Mammary epithelial cell (primary cell): ENCODE measurements at regions of chr16 and their contacts with region 1.

Region 1: DNA sequence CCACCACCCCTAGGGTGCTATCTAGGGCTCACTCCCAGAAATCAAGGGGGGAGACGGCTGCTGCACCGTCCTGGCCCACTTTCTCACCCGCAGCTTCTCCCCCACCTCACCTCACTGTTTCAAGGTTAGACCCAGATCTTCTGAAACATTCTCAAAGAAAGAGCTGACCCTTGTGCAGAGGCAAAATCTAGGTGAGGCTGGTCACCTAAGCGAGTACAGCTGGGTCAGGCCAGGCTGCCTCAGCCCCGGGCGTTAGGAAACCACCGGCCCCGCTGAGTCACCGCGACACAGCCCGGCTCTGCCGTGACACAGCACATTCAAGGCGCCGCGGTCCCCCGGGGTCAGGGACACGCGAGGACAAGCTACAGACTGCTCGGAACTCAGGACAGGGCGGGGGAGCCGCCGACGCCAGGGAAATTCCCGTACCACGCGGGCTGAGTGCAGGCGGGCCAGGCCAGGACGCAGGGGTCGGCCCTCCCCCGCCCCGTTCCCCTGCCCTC is 27.1 kb downstream of the GNPTG start:
- DNase-seq: peak; percentile 85
- H3K4me3 ChIP-seq: peak overlapping the region; percentile 36 to 47 (median 45)
- H3K27ac ChIP-seq: peak overlapping the region; percentile 57
- H3K4me1 ChIP-seq: peaks cover 14% of the 10 kb centered on the region
- H3K27me3 ChIP-seq: no peaks in the 10 kb centered on the region
- CTCF ChIP-seq: no peak

Region 2: GRCh38 chr16:720990-721764 is 657.7 kb before region 1 on chr16 and contains the start of gene ANTKMT:
- CTCF ChIA-PET with region 1: no interaction called
- dilution Hi-C with region 1: loop called (anchors 25 kb)
- in situ Hi-C with region 1: no loop called
- intact Hi-C with region 1: no loop called
- DNase-seq: peak; percentile 77
- H3K4me3 ChIP-seq: peak within 1 kb of the TSS; percentile 65 to 79 (median 78)
- H3K27ac ChIP-seq: peak within 1 kb of the TSS; percentile 24
- H3K4me1 ChIP-seq: peaks cover 32% of the 10 kb centered on the region
- H3K27me3 ChIP-seq: no peaks in the 10 kb centered on the region
- CTCF ChIP-seq: no peak
- total RNA-seq, gene ANTKMT: 13.5 to 35.4 TPM

Region 3: GRCh38 chr16:1113889-1114526 is 264.8 kb before region 1 on chr16:
- CTCF ChIA-PET with region 1: no interaction called
- dilution Hi-C with region 1: loop called (anchors 5 kb)
- in situ Hi-C with region 1: no loop called
- intact Hi-C with region 1: no loop called
- DNase-seq: no peak
- H3K4me3 ChIP-seq: no peak overlapping the region
- H3K27ac ChIP-seq: no peak overlapping the region
- H3K4me1 ChIP-seq: peaks cover 3% of the 10 kb centered on the region
- H3K27me3 ChIP-seq: peaks cover 6% of the 10 kb centered on the region
- CTCF ChIP-seq: no peak

Region 4: GRCh38 chr16:1317479-1318267 is 61.2 kb before region 1 on chr16:
- CTCF ChIA-PET with region 1: no interaction called
- dilution Hi-C with region 1: loop called (anchors 5 kb)
- in situ Hi-C with region 1: no loop called
- intact Hi-C with region 1: no loop called
- DNase-seq: no peak
- H3K4me3 ChIP-seq: no peak overlapping the region
- H3K27ac ChIP-seq: no peak overlapping the region
- H3K4me1 ChIP-seq: peaks cover 4% of the 10 kb centered on the region
- H3K27me3 ChIP-seq: no peaks in the 10 kb centered on the region
- CTCF ChIP-seq: no peak

Region 5: DNA sequence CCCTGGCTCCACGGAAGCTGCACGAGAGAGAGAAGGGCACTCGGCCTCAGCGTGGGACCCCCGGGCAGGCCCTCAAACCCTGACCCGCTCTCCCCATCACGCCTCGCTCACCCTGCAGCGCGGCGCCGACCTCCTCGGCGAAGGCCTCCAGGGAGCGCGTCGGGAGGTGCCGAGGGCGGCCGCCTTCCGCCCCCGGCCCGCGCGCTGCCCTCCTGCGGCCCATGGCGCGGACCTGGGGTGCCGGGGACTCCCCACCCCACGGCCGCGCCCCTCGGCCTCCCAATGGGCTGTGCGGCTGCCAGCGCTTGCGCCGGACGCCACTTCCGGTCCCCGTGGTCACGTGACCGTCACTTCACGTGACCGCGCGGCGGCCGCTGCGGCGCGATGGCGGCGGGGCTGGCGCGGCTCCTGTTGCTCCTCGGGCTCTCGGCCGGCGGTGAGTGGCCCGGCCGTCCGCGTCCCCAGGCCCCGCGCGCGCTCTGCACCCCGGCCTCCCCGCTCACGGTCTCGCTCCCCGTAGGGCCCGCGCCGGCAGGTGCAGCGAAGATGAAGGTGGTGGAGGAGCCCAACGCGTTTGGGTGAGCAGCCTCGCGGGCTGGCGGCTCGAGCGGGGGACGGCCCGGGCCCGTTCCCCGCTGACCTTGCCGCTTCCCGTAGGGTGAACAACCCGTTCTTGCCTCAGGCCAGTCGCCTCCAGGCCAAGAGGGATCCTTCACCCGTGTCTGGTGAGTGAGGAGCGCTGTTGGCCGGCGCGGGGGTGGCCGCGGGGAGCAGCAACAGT is 27.1 kb before region 1 on chr16 and contains the starts of genes GNPTG and TSR3:
- CTCF ChIA-PET with region 1: no interaction called
- dilution Hi-C with region 1: no loop called
- in situ Hi-C with region 1: no loop called
- intact Hi-C with region 1: no loop called
- DNase-seq: peak; percentile 87
- H3K4me3 ChIP-seq: peak within 1 kb of the TSS; percentile 64 to 96 (median 68)
- H3K27ac ChIP-seq: peak within 1 kb of the TSS; percentile 26
- H3K4me1 ChIP-seq: peaks cover 11% of the 10 kb centered on the region
- H3K27me3 ChIP-seq: no peaks in the 10 kb centered on the region
- CTCF ChIP-seq: no peak
- total RNA-seq, gene GNPTG: 33.3 to 34.8 TPM
- total RNA-seq, gene TSR3: 43.8 to 62.1 TPM

Region 6: DNA sequence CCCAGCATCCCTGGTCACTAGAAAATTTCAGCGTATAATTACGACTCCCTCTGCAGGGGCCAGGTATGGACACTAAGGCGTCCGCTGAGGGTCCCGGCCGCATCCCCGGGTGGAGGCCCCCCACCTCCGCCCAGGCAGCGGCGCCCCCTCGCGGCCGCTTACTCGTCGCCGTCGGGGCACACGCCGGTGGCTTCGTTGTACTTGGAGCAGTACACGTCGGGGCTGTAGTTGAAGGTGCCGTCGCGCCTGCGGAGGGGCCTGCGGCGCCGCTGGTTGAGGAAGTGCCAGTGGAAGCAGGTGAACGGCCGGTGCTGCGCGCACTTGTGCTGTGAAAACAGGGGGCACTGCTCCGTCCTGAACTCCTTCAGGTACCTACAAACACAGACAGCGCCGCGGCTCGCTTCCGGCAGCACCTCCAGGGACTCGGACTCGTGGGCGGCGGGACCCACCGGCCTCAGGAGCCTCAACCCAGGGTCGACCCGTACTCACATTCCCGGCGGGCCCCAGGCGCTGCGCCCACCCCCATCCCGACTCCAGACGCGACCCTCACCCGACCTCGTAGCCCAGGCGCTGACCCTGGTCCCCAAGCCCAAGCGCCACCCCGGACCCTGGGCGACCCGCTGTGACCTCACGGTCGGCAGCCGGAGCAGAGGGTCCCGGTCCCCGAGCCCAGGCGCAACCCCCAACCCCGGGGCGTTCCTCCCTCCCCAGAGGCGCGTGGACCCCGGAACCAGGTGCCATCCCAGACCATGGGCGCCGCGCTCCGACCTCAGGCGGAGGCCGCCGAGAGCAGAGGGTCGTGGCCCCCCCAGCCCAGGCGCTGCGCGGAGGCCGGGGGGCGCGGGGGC is 35.1 kb after region 1 on chr16:
- CTCF ChIA-PET with region 1: no interaction called
- dilution Hi-C with region 1: no loop called
- in situ Hi-C with region 1: no loop called
- intact Hi-C with region 1: loop called (anchors 5 kb)
- DNase-seq: peak; percentile 23
- H3K4me3 ChIP-seq: peak overlapping the region; percentile 68 to 92 (median 86)
- H3K27ac ChIP-seq: peak overlapping the region; percentile 44
- H3K4me1 ChIP-seq: peaks cover 4% of the 10 kb centered on the region
- H3K27me3 ChIP-seq: no peaks in the 10 kb centered on the region
- CTCF ChIP-seq: peak; percentile 11 to 66

Region 7: GRCh38 chr16:1435921-1436697 is 57.3 kb after region 1 on chr16:
- CTCF ChIA-PET with region 1: no interaction called
- dilution Hi-C with region 1: loop called (anchors 5 kb)
- in situ Hi-C with region 1: no loop called
- intact Hi-C with region 1: no loop called
- DNase-seq: no peak
- H3K4me3 ChIP-seq: no peak overlapping the region
- H3K27ac ChIP-seq: no peak overlapping the region
- H3K4me1 ChIP-seq: no peaks in the 10 kb centered on the region
- H3K27me3 ChIP-seq: no peaks in the 10 kb centered on the region
- CTCF ChIP-seq: no peak

Region 8: GRCh38 chr16:1509307-1510221 is 130.7 kb after region 1 on chr16:
- CTCF ChIA-PET with region 1: no interaction called
- dilution Hi-C with region 1: loop called (anchors 5 kb)
- in situ Hi-C with region 1: no loop called
- intact Hi-C with region 1: no loop called
- DNase-seq: no peak
- H3K4me3 ChIP-seq: no peak overlapping the region
- H3K27ac ChIP-seq: no peak overlapping the region
- H3K4me1 ChIP-seq: no peaks in the 10 kb centered on the region
- H3K27me3 ChIP-seq: no peaks in the 10 kb centered on the region
- CTCF ChIP-seq: no peak